BJ (cell line): ENCODE measurements at regions of chr16 and their contacts with region 1.

Region 1: GRCh38 chr16:68823401-68824135 is 19.8 kb upstream of the TANGO6 start:
- DNase-seq: peak; percentile 71
- H3K4me3 ChIP-seq: no peak overlapping the region
- H3K27me3 ChIP-seq: no peaks in the 10 kb centered on the region; the same call in 1 of the 2 replicates
- CTCF ChIP-seq: no peak

Region 2: DNA sequence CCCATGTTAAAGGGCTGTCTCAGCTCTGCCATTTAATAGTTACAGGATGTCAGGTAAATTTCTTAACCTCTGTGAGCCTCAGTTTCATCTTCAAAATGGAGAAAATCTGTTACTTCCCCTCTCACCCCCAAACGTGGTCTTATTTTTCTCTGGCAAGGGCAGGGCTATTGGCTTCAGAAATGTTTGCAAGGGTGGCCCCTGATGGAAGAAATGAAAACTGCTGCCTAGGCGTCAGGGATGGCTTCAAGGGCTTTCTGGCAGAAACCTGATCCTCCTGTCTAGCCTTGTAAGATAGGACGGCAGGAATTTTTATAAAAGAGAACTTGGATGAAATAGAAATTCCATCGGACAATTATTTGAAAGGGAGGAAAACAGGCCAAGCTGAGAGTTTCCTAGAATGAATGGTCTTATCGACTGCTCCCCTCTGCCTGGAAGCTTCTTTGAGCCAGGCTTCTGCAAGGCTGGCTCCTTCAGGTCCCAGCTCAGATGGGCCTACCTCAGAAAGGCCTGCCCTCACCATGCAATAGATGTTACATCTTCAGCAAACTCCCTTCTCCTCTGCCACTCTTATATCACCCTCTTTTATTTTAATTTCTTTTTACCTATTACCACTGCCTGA is 23.2 kb before region 1 on chr16:
- CTCF ChIA-PET with region 1: interaction called, 10 read pairs
- POLR2A ChIA-PET with region 1: no interaction called
- DNase-seq: peak; percentile 76
- H3K4me3 ChIP-seq: no peak overlapping the region
- H3K27me3 ChIP-seq: 0 out of 2 replicates have a peak, but pooled peaks cover 1% of the 10 kb centered on the region
- CTCF ChIP-seq: peak; percentile 89

Region 3: DNA sequence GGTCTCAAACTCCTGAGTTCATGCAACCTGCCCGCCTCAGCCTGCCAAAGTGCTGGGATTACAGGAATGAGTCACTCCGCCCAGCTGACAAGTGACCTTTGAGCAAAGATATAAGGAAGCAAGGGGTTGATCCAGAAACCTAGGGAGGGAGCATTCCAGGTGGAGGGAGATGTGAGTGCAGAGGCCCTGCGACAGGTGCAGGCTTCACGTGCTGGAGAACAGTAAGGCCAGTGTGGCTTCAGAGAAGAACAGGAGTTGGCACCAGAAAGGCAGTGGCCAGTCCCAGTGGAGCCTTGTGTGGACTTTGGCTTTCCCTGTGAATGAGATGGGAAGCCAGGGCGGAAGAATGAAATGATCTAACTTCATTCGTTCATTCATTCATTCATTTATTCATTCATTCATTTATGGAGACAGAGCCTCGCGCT is 208.3 kb after region 1 on chr16:
- CTCF ChIA-PET with region 1: no interaction called
- POLR2A ChIA-PET with region 1: no interaction called
- DNase-seq: no peak
- H3K4me3 ChIP-seq: no peak overlapping the region
- H3K27me3 ChIP-seq: no peaks in the 10 kb centered on the region
- CTCF ChIP-seq: no peak

Region 4: GRCh38 chr16:69132424-69133252 is 309.1 kb after region 1 on chr16 and contains the starts of genes CHTF8 and UTP4:
- CTCF ChIA-PET with region 1: no interaction called
- POLR2A ChIA-PET with region 1: interaction called, 15 read pairs
- DNase-seq: no peak
- H3K4me3 ChIP-seq: peak within 1 kb of the TSS; percentile 98
- H3K27me3 ChIP-seq: no peaks in the 10 kb centered on the region
- CTCF ChIP-seq: no peak
- polyA plus RNA-seq, gene CHTF8: 128 and 161 TPM in 2 replicates
- polyA plus RNA-seq, gene UTP4: 59.2 and 60.7 TPM in 2 replicates